ENCODE measurements at regions of chr6 and their contacts with region 1.

Region 1: GRCh38 chr6:37965964-37966676 is 146.6 kb downstream of the ZFAND3 start:
- H3K4me3 ChIP-seq: no peak overlapping the region
- H3K27ac ChIP-seq: no peak overlapping the region
- H3K4me1 ChIP-seq: no peaks in the 10 kb centered on the region
- CTCF ChIP-seq: no peak

Region 2: DNA sequence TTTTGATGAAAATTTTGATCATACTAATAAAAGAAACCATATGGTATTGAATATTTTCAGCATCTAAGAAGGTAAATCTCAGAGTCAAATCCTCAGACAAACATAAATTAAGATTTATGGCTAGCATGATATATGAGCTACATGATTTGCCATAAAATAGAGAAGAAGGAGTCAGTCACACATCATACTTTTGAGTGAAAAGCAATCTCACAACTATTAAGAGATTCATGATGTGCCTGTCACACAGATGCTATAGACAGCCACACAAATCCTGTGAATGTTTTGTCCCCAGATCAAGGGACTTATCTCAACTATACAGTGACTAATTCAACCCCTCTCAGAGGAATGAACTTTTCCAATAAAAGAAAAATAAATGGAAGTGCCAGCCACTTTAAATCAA is 587.9 kb after region 1 on chr6:
- CTCF ChIA-PET with region 1: interaction called, 12 read pairs
- POLR2A ChIA-PET with region 1: no interaction called
- H3K4me3 ChIP-seq: no peak overlapping the region
- H3K27ac ChIP-seq: no peak overlapping the region
- H3K4me1 ChIP-seq: peaks cover 11% of the 10 kb centered on the region
- CTCF ChIP-seq: no peak

Measured in HEK293 (cell line).